ENCODE measurements at regions of chr4 and their contacts with region 1.

Region 1: GRCh38 chr4:84529169-84529751 is 30.2 kb upstream of the NKX6-1 start:
- DNase-seq: no peak
- H3K4me3 ChIP-seq: no peak overlapping the region
- H3K27ac ChIP-seq: no peak overlapping the region
- H3K4me1 ChIP-seq: no peaks in the 10 kb centered on the region
- H3K27me3 ChIP-seq: no peaks in the 10 kb centered on the region
- CTCF ChIP-seq: peak in 2 of 3 experiments; percentile 16 to 62; a peak in 2 of 4 replicates
- EP300 ChIP-seq: no peak
- POLR2A ChIP-seq: no peak
- RAD21 ChIP-seq: peak in 1 of 2 experiments; percentile 34

Region 2: DNA sequence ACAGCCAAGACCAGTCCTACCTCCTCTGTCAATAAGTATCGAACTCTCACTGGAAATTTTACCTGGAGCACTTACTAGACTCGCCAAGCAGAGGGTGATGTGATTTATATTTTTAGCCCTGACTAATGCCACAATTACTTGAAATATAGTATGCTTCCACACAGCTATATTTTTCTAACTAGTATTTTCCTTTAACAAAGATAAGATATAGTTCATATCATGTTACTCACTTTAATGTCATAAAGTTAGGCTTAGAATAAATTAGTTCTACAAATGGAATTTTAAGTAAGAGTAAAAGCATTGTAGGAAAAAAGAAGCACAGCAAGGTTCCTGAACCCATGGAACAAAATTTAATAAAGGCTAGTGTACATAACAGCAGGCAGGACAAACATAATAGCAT is 14.2 kb before region 1 on chr4:
- CTCF ChIA-PET with region 1: interaction called, 10 read pairs
- POLR2A ChIA-PET with region 1: no interaction called
- DNase-seq: no peak
- H3K4me3 ChIP-seq: no peak overlapping the region
- H3K27ac ChIP-seq: no peak overlapping the region
- H3K4me1 ChIP-seq: no peaks in the 10 kb centered on the region
- H3K27me3 ChIP-seq: no peaks in the 10 kb centered on the region
- CTCF ChIP-seq: no peak
- EP300 ChIP-seq: no peak
- POLR2A ChIP-seq: no peak
- RAD21 ChIP-seq: no peak

Region 3: DNA sequence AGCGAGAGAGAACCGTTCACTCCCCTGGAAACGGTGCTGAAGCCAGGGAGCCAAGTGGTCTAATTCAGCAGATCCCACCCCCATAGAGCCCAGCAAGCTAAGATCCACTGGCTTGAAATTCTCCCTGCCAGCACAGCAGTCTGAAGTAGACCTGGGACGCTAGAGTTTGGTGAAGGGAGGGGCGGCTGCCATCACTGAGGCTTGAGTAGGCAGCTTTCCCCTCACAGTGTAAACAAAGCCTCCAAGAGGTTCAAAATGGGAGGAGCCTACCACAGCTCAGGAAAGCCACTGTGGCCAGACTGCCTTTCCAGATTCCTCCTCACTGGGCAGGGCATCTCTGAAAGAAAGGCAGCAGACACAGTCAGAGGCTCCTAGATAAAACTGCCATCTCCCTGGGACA is 15.8 kb after region 1 on chr4:
- CTCF ChIA-PET with region 1: interaction called, 12 read pairs
- POLR2A ChIA-PET with region 1: no interaction called
- DNase-seq: no peak
- H3K4me3 ChIP-seq: no peak overlapping the region
- H3K27ac ChIP-seq: no peak overlapping the region
- H3K4me1 ChIP-seq: no peaks in the 10 kb centered on the region; a peak in 1 of 7 replicates
- H3K27me3 ChIP-seq: no peaks in the 10 kb centered on the region
- CTCF ChIP-seq: no peak
- EP300 ChIP-seq: no peak
- POLR2A ChIP-seq: no peak
- RAD21 ChIP-seq: no peak

Region 4: DNA sequence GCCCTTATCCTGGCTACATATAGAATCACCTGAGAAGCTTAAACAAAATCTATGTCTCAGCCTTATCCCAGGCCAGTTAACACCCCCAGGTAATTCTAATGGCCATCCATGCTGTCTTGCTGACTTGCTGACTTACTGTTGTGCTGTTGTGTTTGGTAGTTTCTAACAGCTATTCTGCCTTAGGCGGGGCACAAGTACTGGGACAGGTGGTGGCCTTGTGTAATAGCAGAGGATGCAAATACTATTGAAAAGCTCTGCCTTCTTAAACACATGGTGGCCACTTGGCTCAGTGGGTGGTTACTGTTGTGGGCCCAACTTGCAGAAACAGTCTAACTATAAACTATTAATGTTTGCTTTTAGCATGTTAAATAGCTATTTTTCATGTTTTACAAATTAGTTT is 109.9 kb after region 1 on chr4:
- CTCF ChIA-PET with region 1: no interaction called
- POLR2A ChIA-PET with region 1: no interaction called
- DNase-seq: no peak
- H3K4me3 ChIP-seq: no peak overlapping the region
- H3K27ac ChIP-seq: no peak overlapping the region
- H3K4me1 ChIP-seq: peaks cover 0 to 3% (median 0%) of the 10 kb centered on the region in 4 experiments; a peak in 1 of 7 replicates
- H3K27me3 ChIP-seq: no peaks in the 10 kb centered on the region
- CTCF ChIP-seq: no peak
- EP300 ChIP-seq: no peak
- POLR2A ChIP-seq: no peak
- RAD21 ChIP-seq: no peak

Region 5: DNA sequence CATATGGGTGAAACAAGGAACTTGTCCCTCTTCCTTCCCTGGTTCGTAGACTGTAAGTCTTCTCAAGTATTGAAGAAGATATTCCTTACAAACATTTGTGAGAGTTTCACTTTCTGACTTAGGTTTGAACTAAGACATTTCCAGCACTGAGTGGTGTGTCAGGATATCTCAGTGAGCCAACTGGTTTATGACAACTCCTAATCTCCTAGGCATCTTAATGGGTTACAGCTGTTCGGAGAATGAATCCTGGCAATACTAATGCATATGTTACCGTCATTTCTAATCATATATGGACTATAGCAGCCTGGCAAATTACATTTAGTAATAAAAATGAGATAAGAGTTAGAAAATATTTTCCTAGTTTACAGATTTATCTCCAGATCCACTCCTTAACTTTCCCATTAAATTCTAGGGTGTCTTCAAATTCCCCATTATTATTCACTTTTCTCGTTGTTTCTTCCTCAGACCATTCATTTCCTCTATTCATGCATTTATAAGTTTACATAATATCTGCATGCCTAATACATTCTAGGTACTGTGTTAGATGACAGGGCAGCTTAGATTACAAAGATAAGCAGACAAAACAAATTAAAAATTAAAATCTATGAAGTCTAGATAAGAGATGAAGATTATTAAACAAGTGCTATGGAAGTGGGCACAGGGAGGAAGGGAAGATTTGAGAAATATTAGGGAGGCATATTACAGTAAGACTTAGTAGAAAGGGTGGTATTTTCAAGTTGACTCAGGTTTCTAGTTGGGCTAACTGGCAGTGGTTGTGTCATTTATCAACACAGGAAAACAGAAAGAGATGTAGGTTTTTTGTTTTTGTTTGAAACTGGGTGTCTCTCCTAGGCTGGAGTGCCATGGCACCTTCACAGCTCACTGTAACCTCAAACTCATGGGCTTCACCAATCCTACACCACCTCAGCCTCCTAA is 263.4 kb after region 1 on chr4:
- CTCF ChIA-PET with region 1: no interaction called
- POLR2A ChIA-PET with region 1: no interaction called
- DNase-seq: no peak
- H3K4me3 ChIP-seq: no peak overlapping the region
- H3K27ac ChIP-seq: no peak overlapping the region
- H3K4me1 ChIP-seq: no peaks in the 10 kb centered on the region
- H3K27me3 ChIP-seq: no peaks in the 10 kb centered on the region
- CTCF ChIP-seq: no peak
- EP300 ChIP-seq: no peak
- POLR2A ChIP-seq: no peak
- RAD21 ChIP-seq: no peak